ENCODE measurements at regions of chr22 and their contacts with region 1.

Region 1: GRCh38 chr22:31872209-31872608 is 72.1 kb upstream of the YWHAH start:
- DNase-seq: peak; percentile 13
- H3K4me3 Mint-ChIP-seq: no peak overlapping the region
- H3K27ac Mint-ChIP-seq: no peak overlapping the region
- H3K4me1 Mint-ChIP-seq: peaks cover 16% of the 10 kb centered on the region
- H3K27me3 Mint-ChIP-seq: no peaks in the 10 kb centered on the region
- CTCF ChIP-seq: no peak

Region 2: DNA sequence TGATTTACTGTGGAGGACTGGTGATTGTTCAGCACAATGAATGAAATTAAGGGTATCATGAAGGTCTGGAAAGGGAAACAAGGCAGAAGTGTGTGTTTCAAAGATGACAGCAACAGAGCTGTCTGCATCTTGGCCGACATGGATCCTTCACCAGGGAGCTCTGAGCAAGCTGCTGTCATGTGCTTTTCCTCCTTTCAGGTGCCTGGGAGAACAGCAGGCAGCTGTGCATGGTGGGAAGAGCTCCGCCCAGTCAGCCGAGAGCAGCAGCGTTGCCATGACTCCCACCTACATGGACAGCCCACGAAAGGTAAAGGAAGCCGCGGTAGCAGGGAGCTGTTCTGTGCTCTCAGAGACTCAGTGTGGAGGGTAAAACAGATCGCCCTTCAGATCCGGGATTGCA is 15.0 kb before region 1 on chr22:
- CTCF ChIA-PET with region 1: interaction called, 11 read pairs
- POLR2A ChIA-PET with region 1: interaction called, 3 read pairs
- intact Hi-C with region 1: no loop called
- DNase-seq: no peak
- H3K4me3 Mint-ChIP-seq: no peak overlapping the region
- H3K27ac Mint-ChIP-seq: no peak overlapping the region
- H3K4me1 Mint-ChIP-seq: no peaks in the 10 kb centered on the region
- H3K27me3 Mint-ChIP-seq: no peaks in the 10 kb centered on the region
- CTCF ChIP-seq: no peak